SK-N-SH (cell line): ENCODE measurements at regions of chr9 and their contacts with region 1.

Region 1: GRCh38 chr9:33225319-33226149 is 14.4 kb upstream of the SPINK4 start:
- DNase-seq: peak; percentile 38
- H3K4me3 ChIP-seq: peak overlapping the region in 1 of 2 experiments; percentile 38; a peak in 2 of 4 replicates
- H3K27ac ChIP-seq: peak overlapping the region in 1 of 2 experiments; percentile 29; a peak in 1 of 4 replicates
- H3K4me1 ChIP-seq: peaks cover 2 to 3% of the 10 kb centered on the region in 2 experiments; a peak in 1 of 4 replicates
- H3K27me3 ChIP-seq: no peaks in the 10 kb centered on the region
- CTCF ChIP-seq: peak; percentile 80
- EP300 ChIP-seq: no peak
- RAD21 ChIP-seq: peak; percentile 85

Region 2: GRCh38 chr9:33076358-33077004 is 149.1 kb before region 1 on chr9 and contains the start of gene SMU1:
- CTCF ChIA-PET with region 1: interaction called, 57 read pairs
- POLR2A ChIA-PET with region 1: interaction called, 5 read pairs
- DNase-seq: peak; percentile 96
- H3K4me3 ChIP-seq: peak within 1 kb of the TSS; percentile 79 to 80
- H3K27ac ChIP-seq: peak within 1 kb of the TSS; percentile 81 to 84
- H3K4me1 ChIP-seq: peaks cover 5 to 6% of the 10 kb centered on the region in 2 experiments; a peak in 3 of 4 replicates
- H3K27me3 ChIP-seq: no peaks in the 10 kb centered on the region
- CTCF ChIP-seq: no peak
- EP300 ChIP-seq: no peak; a peak in 1 of 4 replicates
- RAD21 ChIP-seq: no peak
- polyA plus RNA-seq, gene SMU1: 9.8 and 12.4 TPM in 2 replicates

Region 3: DNA sequence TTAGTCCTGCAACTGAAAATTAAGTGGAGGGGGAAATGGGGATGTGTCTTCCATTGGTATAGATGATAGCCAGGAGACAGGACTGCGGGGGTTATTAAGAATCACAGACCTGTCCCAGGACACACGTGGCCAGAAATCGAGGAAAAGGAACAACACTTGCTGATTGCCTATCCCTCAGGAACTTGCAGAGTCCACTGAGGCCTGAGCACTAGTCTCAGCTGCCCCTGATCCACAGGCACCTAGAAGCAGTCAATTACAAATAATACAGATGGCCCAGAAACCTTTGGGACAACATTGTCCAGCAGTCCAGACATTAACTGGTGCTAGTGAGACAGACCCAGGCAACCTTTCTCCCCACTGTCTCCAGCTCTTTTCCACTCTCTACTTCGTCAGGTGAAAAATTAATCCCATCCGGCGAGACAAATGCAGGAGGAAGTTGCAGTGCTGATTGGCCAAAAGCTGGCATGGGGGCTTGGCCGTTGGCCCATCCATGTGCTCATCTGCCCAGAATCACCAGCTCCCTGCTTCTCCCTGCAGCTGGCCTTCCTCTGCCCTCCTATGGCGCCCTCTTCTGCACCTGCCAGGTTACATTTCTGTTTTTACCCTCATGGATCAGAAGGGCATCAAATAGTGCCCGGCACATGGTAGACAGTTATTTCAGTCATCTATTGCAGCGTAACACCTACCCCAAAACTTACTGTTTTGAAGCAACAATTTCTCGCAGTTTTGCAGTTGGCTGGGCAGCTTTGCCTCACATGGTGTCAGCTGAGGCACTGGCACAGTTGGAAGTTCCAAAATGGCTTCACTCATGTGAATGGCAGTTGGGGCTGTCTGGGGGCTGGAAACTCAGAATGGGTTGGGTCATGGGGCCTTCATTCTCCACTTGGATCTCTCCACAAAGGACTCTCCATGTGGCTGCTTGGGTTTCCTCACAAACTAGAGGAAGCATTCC is 54.8 kb before region 1 on chr9:
- CTCF ChIA-PET with region 1: interaction called, 10 read pairs
- POLR2A ChIA-PET with region 1: no interaction called
- DNase-seq: peak; percentile 64
- H3K4me3 ChIP-seq: no peak overlapping the region
- H3K27ac ChIP-seq: no peak overlapping the region
- H3K4me1 ChIP-seq: peaks cover 8 to 19% of the 10 kb centered on the region in 2 experiments; a peak in 2 of 4 replicates
- H3K27me3 ChIP-seq: no peaks in the 10 kb centered on the region
- CTCF ChIP-seq: peak; percentile 47
- EP300 ChIP-seq: no peak
- RAD21 ChIP-seq: peak; percentile 80

Region 4: DNA sequence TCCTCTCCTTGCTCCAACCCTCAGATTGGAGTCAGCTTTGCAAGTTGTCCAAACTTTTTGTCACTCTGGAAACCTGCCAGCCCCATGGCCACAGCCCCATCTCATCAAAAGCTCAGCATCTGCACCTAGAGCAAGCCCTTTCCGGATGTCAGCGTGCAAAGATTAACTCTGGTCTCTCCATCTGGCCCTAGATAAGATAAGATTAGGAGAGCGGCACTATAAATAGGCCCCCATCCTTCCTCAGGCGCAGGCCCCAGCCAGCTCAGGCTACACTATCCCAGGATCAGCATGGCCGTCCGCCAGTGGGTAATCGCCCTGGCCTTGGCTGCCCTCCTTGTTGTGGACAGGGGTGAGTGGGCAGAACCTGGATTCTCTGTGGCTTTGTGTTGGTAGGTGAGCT is 14.4 kb after region 1 on chr9 and contains the start of gene SPINK4:
- CTCF ChIA-PET with region 1: interaction called, 41 read pairs
- POLR2A ChIA-PET with region 1: no interaction called
- DNase-seq: peak; percentile 78
- H3K4me3 ChIP-seq: no peak within 1 kb of the TSS
- H3K27ac ChIP-seq: peak within 1 kb of the TSS in 1 of 2 experiments; percentile 51; a peak in 2 of 4 replicates
- H3K4me1 ChIP-seq: peaks cover 0 to 14% of the 10 kb centered on the region in 2 experiments; a peak in 1 of 4 replicates
- H3K27me3 ChIP-seq: no peaks in the 10 kb centered on the region
- CTCF ChIP-seq: no peak
- EP300 ChIP-seq: peak in 1 of 2 experiments; percentile 87; a peak in 2 of 4 replicates
- RAD21 ChIP-seq: no peak; the same call in 1 of the 2 replicates
- polyA plus RNA-seq, gene SPINK4: not detected in 2 replicates